ENCODE measurements at regions of chr1 and their contacts with region 1.

Region 1: GRCh38 chr1:169348383-169349036 is 19.1 kb downstream of the NME7 start:
- DNase-seq: no peak
- H3K4me3 ChIP-seq: no peak overlapping the region
- H3K27ac ChIP-seq: no peak overlapping the region
- H3K27me3 ChIP-seq: no peaks in the 10 kb centered on the region
- CTCF ChIP-seq: peak; percentile 72 to 97 (median 87)

Region 2: GRCh38 chr1:168439456-168440375 is 908.8 kb before region 1 on chr1:
- intact Hi-C with region 1: loop called in 1 of 2 experiments (anchors 5 kb)
- DNase-seq: peak; percentile 30 to 92 (median 74)
- H3K4me3 ChIP-seq: peak overlapping the region in 43 of 59 donors; percentile 5 to 53 (median 32)
- H3K27ac ChIP-seq: peak overlapping the region in 41 of 59 donors; percentile 9 to 83 (median 61)
- H3K27me3 ChIP-seq: peaks cover 0 to 2% (median 0%) of the 10 kb centered on the region in 45 donors
- CTCF ChIP-seq: peak; percentile 53 to 84 (median 74)

Region 3: GRCh38 chr1:168603501-168604110 is 744.9 kb before region 1 on chr1:
- intact Hi-C with region 1: loop called in 1 of 2 experiments (anchors 5 kb)
- DNase-seq: peak; percentile 66 to 89 (median 80)
- H3K4me3 ChIP-seq: no peak overlapping the region
- H3K27ac ChIP-seq: peak overlapping the region in 3 of 59 donors; percentile 2 to 13 (median 9)
- H3K27me3 ChIP-seq: no peaks in the 10 kb centered on the region
- CTCF ChIP-seq: peak; percentile 25 to 93 (median 85)

Region 4: DNA sequence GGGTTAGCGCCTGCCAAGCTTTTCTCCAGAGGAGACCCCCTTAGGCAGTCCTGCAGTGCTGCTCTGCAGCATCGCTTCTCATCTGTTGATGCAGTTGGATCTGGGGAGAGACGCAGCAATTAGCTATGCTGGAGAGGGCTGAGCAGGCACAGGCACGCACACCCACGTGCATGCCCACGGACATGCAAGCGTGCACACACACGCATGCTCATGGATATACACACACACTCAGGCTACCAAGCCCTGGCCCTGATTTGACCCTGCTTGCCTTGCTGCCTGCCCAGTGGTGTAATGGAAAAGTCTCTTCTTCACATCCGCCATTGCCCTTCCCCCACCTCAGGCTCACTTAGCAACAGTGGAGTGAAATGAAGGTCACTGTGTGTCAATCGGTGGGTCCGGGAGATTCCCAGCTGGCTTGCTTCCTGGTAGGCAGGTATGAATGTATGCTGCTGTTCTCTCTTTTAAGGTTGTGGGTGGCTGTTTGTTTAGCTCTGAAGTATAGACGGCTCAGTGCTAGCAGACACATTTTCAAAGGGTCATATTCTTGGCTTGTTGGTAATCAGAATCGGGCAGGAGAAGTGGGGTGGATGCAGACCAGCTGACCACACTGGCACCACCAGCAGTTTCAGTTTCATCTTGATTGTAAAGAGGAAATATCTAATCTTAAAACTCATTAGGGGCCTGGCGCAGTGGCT is 232.5 kb before region 1 on chr1:
- intact Hi-C with region 1: loop called (anchors 10 kb)
- DNase-seq: peak in 4 of 10 donors; percentile 46 to 54 (median 49)
- H3K4me3 ChIP-seq: peak overlapping the region in 55 of 59 donors; percentile 2 to 81 (median 33)
- H3K27ac ChIP-seq: peak overlapping the region in 57 of 59 donors; percentile 16 to 98 (median 71)
- H3K27me3 ChIP-seq: no peaks in the 10 kb centered on the region
- CTCF ChIP-seq: no peak

Region 5: GRCh38 chr1:169122976-169123375 is 225.5 kb before region 1 on chr1:
- intact Hi-C with region 1: loop called (anchors 10 kb)
- DNase-seq: no peak
- H3K4me3 ChIP-seq: peak overlapping the region in 2 of 59 donors; percentile 1 to 29
- H3K27ac ChIP-seq: peak overlapping the region in 24 of 59 donors; percentile 4 to 72 (median 30)
- H3K27me3 ChIP-seq: no peaks in the 10 kb centered on the region
- CTCF ChIP-seq: no peak

Region 6: DNA sequence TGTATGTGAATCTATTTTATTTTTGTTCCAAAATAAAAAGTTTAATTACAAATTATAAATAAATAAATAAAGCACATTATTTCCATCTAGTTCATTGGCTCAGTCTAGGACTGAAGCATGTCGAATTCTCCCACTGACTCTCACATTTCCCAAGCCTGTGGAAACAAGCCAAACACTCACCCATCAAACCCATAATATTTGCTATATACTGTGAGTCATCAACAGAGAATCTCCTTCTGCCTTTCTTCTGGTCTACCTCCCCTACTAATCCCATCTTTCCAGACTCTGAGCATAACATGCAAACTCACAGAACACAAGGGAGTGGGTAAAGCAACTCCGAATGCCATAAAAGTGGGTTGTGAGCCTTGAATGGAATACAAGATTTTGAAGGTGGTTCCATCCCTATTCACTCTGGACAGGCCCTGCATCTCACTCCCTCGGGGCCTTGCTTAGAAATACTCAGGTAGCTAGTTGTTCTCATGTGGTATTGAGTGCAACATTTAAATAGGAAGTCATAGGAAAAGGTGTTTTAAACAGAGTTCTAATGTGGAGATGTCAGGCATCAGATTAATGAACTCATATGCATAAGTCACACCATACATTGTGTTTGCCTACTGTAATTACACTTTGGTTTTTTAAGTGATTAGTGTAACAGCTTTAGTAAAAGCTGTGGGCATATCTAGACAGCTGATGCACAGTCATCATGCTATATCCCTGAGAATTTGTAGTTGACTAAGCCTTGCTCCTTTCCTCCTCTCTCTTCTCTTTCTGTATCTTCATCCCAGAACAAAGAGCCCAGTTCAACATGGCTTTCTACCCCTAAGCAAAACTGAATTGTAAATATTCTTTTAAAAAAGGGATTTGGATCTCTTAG is 190.7 kb after region 1 on chr1:
- intact Hi-C with region 1: no loop called
- DNase-seq: no peak
- H3K4me3 ChIP-seq: no peak overlapping the region
- H3K27ac ChIP-seq: no peak overlapping the region
- H3K27me3 ChIP-seq: no peaks in the 10 kb centered on the region
- CTCF ChIP-seq: no peak